ENCODE measurements at regions of chr1 and their contacts with region 1.

Region 1: GRCh38 chr1:207463021-207463420 is 8.9 kb downstream of the CR2 start:
- DNase-seq: peak in 1 of 3 donors; percentile 5
- H3K4me3 ChIP-seq: no peak overlapping the region
- H3K4me3 Mint-ChIP-seq: no peak overlapping the region
- H3K27ac ChIP-seq: no peak overlapping the region
- H3K27ac Mint-ChIP-seq: no peak overlapping the region
- H3K4me1 ChIP-seq: no peaks in the 10 kb centered on the region
- H3K4me1 Mint-ChIP-seq: no peaks in the 10 kb centered on the region
- H3K27me3 ChIP-seq: no peaks in the 10 kb centered on the region
- H3K27me3 Mint-ChIP-seq: peaks cover 2 to 4% (median 2%) of the 10 kb centered on the region in 3 donors
- CTCF ChIP-seq: no peak

Region 2: DNA sequence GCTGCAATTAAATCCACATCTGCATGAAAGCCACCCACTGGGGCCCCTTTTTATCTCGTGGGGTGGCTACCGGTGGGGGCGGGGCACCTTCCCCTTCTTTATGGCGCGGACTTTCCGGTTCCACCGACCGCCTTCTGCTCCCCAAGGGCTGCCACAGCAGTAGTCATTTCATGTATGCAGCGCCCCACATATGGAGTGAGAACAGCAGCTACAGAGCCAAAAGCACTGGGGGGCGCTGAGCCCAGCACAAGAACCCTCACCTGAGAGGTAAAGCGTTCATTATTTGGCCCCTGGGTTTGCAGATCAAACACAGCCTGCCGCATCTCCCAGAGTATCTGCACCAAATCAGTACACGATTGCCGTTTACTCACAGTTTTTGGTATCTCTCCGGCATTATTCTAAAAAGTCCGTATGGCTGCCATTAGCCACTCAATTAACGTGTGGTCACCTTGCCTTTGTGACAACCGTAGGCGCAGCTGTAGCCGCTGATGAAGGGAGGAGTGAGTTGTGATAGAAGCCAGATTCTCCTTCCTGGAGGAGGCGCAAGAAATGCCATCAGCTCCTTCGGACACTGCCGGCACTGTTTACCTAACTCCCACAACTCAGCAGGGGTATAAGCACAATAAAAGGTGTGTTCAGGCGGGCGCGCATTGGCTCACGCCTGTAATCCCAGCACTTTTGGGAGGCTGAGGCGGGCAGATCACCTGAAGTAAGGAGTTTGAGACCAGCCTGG is 39.3 kb before region 1 on chr1:
- intact Hi-C with region 1: loop called in 1 of 2 experiments (anchors 5 kb)
- DNase-seq: no peak
- H3K4me3 ChIP-seq: no peak overlapping the region
- H3K4me3 Mint-ChIP-seq: no peak overlapping the region
- H3K27ac ChIP-seq: no peak overlapping the region
- H3K27ac Mint-ChIP-seq: no peak overlapping the region
- H3K4me1 ChIP-seq: peaks cover 3 to 4% of the 10 kb centered on the region in 2 donors
- H3K4me1 Mint-ChIP-seq: peaks cover 5% of the 10 kb centered on the region
- H3K27me3 ChIP-seq: no peaks in the 10 kb centered on the region
- H3K27me3 Mint-ChIP-seq: peaks cover 0 to 10% (median 0%) of the 10 kb centered on the region in 3 donors
- CTCF ChIP-seq: no peak